ENCODE measurements at regions of chr2 and their contacts with region 1.

Region 1: DNA sequence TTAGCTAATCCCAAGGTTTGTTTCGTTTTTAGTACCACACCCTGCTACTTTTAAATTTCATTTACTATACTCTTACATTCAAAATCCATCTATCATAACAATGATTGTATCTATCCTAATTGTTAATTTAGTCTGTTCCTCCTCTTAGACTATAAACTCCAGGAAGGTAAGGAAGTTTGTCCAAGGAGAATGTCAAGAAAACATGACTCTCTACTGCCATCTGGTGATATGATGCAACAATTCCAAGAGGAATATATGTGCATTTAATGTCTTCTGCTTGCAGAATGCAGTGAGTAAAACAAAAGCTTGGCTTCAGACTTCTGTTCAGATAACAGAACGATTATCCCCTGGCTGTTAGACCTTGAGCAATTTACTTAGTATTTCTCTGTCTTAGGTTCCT is 1267.1 kb downstream of the LRP1B start:
- DNase-seq: no peak
- H3K4me3 ChIP-seq: no peak overlapping the region
- CTCF ChIP-seq: peak; percentile 45

Region 2: GRCh38 chr2:140586379-140586778 is 277.3 kb before region 1 on chr2:
- CTCF ChIA-PET with region 1: interaction called, 11 read pairs
- POLR2A ChIA-PET with region 1: no interaction called
- DNase-seq: no peak
- H3K4me3 ChIP-seq: no peak overlapping the region
- CTCF ChIP-seq: peak; percentile 72

Region 3: DNA sequence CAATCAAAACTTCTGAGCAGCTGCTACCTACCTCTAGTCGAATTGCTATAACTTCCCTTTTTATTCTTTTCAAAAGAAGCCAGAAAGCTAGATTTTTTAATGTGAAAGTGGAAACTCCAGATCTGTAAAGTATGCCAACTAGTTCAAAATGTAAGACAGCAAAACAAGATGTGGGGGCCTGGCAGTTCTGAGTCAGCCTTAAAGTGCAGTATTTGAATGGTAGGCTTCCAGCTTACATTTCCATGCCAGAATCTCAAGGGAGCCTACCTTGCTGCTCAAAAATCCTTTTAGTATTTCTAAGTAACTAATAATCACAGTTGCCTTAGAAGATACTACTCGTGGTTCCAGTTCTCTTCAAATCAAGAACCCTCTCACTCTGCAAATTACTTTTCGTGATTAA is 21.6 kb before region 1 on chr2:
- CTCF ChIA-PET with region 1: no interaction called
- POLR2A ChIA-PET with region 1: no interaction called
- DNase-seq: no peak
- H3K4me3 ChIP-seq: no peak overlapping the region
- CTCF ChIP-seq: no peak

Measured in AG04449 (cell line).